ENCODE measurements at regions of chr18 and their contacts with region 1.

Region 1: DNA sequence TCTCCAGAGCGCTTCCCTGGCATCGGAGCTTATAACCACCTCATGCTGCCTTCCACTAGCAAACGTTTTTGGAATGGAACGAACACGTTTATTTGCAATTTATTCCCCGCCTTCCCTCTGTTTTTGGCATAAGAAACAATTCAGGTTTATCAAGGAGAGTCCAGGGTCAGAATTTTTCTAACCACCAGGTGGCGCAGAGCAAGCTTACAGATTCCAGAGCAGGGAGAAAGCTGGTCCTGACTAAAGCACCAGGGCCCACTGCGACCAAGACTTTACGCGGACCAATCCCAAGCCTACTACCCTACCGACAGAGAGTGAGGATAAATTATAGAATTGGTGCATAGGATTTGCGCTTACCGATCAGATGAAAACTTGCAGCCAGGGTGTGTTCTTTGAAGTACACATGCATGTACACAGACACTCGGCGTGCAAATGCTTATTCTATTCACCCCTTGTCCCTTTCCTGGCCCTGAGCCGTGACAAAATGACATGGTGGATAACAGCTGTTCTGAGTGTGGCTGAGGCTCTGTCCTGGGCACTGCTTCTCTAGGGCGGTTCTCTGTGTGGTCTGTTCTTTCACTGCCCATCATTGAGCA is 34.7 kb downstream of the NAPG start:
- DNase-seq: peak; percentile 59
- H3K4me3 ChIP-seq: peak overlapping the region in 1 of 4 donors; percentile 32
- H3K27ac ChIP-seq: no peak overlapping the region
- H3K4me1 ChIP-seq: peaks cover 0 to 5% (median 5%) of the 10 kb centered on the region in 4 donors
- H3K27me3 ChIP-seq: no peaks in the 10 kb centered on the region
- CTCF ChIP-seq: peak; percentile 68 to 82 (median 76)
- EP300 ChIP-seq: no peak
- POLR2A ChIP-seq: no peak

Region 2: GRCh38 chr18:10453806-10454673 is 106.5 kb before region 1 on chr18 and contains the start of gene APCDD1:
- in situ Hi-C with region 1: no loop called
- intact Hi-C with region 1: no loop called
- DNase-seq: peak; percentile 45
- H3K4me3 ChIP-seq: peak within 1 kb of the TSS; percentile 41 to 74 (median 56)
- H3K27ac ChIP-seq: peak within 1 kb of the TSS; percentile 74 to 84 (median 80)
- H3K4me1 ChIP-seq: peaks cover 0 to 21% (median 2%) of the 10 kb centered on the region in 4 donors
- H3K27me3 ChIP-seq: peaks cover 46% of the 10 kb centered on the region
- CTCF ChIP-seq: no peak
- EP300 ChIP-seq: no peak
- POLR2A ChIP-seq: no peak
- total RNA-seq, gene APCDD1: 2.6 to 10.8 (median 8.3) TPM

Region 3: GRCh38 chr18:10826400-10826799 is 265.9 kb after region 1 on chr18:
- in situ Hi-C with region 1: no loop called
- intact Hi-C with region 1: no loop called
- DNase-seq: no peak
- H3K4me3 ChIP-seq: no peak overlapping the region
- H3K27ac ChIP-seq: no peak overlapping the region
- H3K4me1 ChIP-seq: no peaks in the 10 kb centered on the region
- H3K27me3 ChIP-seq: no peaks in the 10 kb centered on the region
- CTCF ChIP-seq: no peak
- EP300 ChIP-seq: no peak
- POLR2A ChIP-seq: no peak

Region 4: GRCh38 chr18:11149441-11150270 is 589.1 kb after region 1 on chr18 and contains the start of gene PIEZO2:
- in situ Hi-C with region 1: loop called in 1 of 4 experiments (anchors 25 kb)
- intact Hi-C with region 1: no loop called
- DNase-seq: peak; percentile 30
- H3K4me3 ChIP-seq: peak within 1 kb of the TSS in 3 of 4 donors; percentile 18 to 47 (median 32)
- H3K27ac ChIP-seq: peak within 1 kb of the TSS in 1 of 4 donors; percentile 37
- H3K4me1 ChIP-seq: peaks cover 0 to 18% (median 9%) of the 10 kb centered on the region in 4 donors
- H3K27me3 ChIP-seq: peaks cover 40% of the 10 kb centered on the region
- CTCF ChIP-seq: no peak
- EP300 ChIP-seq: no peak
- POLR2A ChIP-seq: no peak
- total RNA-seq, gene PIEZO2: 2.9 to 7.5 (median 4.5) TPM

Measured in transverse colon (tissue), 4 donors.